ENCODE measurements at regions of chr4 and their contacts with region 1.

Region 1: DNA sequence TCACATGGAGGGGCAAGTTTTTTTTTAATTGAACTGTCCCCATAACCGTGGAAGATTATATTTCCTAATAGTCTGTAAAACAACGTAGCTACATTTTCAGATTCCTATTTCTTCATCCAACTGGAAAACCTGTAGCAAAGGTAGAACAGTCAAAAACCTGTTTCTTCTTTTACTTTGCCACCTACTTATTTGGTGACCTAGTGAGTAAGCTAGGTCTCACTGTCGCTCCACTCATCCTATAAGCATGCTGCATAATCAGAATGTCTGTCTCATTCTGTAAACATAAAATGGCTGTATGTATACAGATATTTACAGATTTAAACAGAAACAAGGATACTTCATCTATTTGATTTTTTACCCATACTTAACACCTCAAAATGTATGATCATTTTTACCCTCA is 20.4 kb downstream of the MAML3 start:
- DNase-seq: no peak
- H3K4me3 ChIP-seq: no peak overlapping the region
- H3K27ac ChIP-seq: no peak overlapping the region
- H3K4me1 ChIP-seq: peaks cover 0 to 36% (median 7%) of the 10 kb centered on the region in 4 donors
- H3K27me3 ChIP-seq: no peaks in the 10 kb centered on the region
- CTCF ChIP-seq: no peak

Region 2: GRCh38 chr4:140198942-140199341 is 65.4 kb after region 1 on chr4:
- intact Hi-C with region 1: loop called (anchors 2 kb)
- DNase-seq: no peak
- H3K4me3 ChIP-seq: no peak overlapping the region
- H3K27ac ChIP-seq: no peak overlapping the region
- H3K4me1 ChIP-seq: no peaks in the 10 kb centered on the region
- H3K27me3 ChIP-seq: no peaks in the 10 kb centered on the region
- CTCF ChIP-seq: no peak

Region 3: DNA sequence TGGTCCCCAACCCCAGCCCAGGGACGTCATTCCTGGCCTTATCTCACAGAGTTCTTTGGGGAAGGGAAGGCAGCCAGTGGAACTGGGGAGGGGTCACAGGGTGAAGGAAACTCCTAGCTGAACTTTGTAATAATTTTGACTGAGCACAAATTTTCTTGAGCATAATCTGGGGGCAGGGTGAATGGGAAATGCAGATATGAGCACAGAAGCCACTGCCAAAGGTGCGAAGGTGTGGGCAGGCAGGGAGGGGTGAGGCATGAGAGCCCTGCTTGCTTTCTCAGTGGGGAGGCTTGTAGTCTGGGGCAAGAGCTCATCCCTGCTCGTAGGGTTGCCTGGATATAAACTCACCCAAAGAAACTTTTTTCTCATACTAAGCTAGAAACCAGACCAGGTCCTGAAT is 329.6 kb after region 1 on chr4:
- intact Hi-C with region 1: no loop called
- DNase-seq: no peak
- H3K4me3 ChIP-seq: no peak overlapping the region
- H3K27ac ChIP-seq: no peak overlapping the region
- H3K4me1 ChIP-seq: no peaks in the 10 kb centered on the region
- H3K27me3 ChIP-seq: no peaks in the 10 kb centered on the region
- CTCF ChIP-seq: no peak

Measured in tibial artery (tissue), 4 donors.